Transverse colon (tissue), 4 donors: ENCODE measurements at regions of chr7 and their contacts with region 1.

Region 1: DNA sequence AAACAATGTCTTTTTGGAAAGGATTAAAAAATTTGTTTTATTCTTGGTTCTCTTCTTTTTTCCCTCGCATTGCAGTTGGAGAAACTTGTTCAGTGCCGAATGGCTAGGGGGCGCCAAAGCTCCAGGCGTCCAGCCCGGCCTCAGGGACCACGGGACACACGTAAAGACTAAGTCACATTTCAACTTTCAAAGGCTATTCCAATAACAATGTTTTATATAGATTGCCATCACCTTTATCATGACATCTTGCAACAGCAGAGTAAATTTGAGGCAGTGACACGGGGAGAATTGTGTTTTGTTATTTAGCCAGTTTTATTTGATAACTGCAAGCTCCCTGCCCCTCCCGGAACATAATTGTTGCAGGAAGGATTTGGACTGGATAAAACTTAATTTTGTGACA is 2.2 kb upstream of the IGFBP3 start:
- DNase-seq: peak; percentile 64
- H3K4me3 ChIP-seq: no peak overlapping the region
- H3K27ac ChIP-seq: peak overlapping the region in 3 of 4 donors; percentile 7 to 76 (median 30)
- H3K4me1 ChIP-seq: peaks cover 0 to 27% (median 19%) of the 10 kb centered on the region in 4 donors
- H3K27me3 ChIP-seq: peaks cover 54% of the 10 kb centered on the region
- CTCF ChIP-seq: peak; percentile 69 to 84 (median 80)
- EP300 ChIP-seq: no peak
- POLR2A ChIP-seq: no peak

Region 2: GRCh38 chr7:46352004-46352954 is 429.0 kb after region 1 on chr7:
- in situ Hi-C with region 1: loop called in 2 of 4 experiments (anchors 5 to 10 kb)
- intact Hi-C with region 1: no loop called
- DNase-seq: no peak
- H3K4me3 ChIP-seq: no peak overlapping the region
- H3K27ac ChIP-seq: no peak overlapping the region
- H3K4me1 ChIP-seq: no peaks in the 10 kb centered on the region
- H3K27me3 ChIP-seq: no peaks in the 10 kb centered on the region
- CTCF ChIP-seq: peak in 4 of 5 experiments; percentile 21 to 38 (median 25)
- EP300 ChIP-seq: no peak
- POLR2A ChIP-seq: no peak

Region 3: DNA sequence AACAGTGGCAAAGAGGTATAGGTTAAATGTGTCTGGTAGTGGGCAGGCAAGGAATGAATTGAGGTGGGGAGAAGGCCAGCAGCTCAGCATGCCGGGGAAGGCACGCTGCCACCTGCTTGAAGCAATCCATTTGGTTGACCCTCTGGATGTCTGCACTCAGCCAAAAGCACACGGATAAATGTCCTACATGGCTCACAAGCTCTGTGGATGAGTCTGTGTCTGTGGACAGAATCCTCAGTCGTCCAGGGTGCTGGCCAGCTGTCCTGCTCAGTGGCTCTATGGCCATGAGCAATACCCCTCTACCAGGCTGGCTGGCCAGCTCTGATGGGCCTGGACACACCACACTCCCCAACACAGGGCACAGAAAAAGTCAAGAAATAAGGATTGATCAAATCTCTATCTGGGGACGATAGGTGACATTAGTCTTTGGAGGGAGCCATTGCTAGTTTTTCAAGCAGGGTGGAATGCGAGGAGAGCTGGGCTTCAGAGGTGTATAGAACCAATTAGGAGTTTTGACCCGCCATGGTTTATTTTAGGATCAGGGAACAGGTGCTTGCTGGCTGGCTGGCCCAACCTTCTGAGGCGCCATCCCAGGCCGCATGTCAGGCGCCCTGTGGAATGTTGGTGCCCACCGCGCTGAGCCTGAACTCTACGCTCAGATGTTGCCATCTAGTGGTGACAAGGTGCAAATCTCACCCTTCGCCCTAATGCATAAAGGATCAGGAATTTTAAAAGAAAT is 1165.2 kb after region 1 on chr7:
- in situ Hi-C with region 1: loop called (anchors 5 to 10 kb)
- intact Hi-C with region 1: loop called (anchors 2 kb)
- DNase-seq: peak; percentile 27
- H3K4me3 ChIP-seq: no peak overlapping the region
- H3K27ac ChIP-seq: no peak overlapping the region
- H3K4me1 ChIP-seq: peaks cover 0 to 2% (median 0%) of the 10 kb centered on the region in 4 donors
- H3K27me3 ChIP-seq: no peaks in the 10 kb centered on the region
- CTCF ChIP-seq: peak; percentile 85 to 88 (median 86)
- EP300 ChIP-seq: no peak
- POLR2A ChIP-seq: no peak

Region 4: DNA sequence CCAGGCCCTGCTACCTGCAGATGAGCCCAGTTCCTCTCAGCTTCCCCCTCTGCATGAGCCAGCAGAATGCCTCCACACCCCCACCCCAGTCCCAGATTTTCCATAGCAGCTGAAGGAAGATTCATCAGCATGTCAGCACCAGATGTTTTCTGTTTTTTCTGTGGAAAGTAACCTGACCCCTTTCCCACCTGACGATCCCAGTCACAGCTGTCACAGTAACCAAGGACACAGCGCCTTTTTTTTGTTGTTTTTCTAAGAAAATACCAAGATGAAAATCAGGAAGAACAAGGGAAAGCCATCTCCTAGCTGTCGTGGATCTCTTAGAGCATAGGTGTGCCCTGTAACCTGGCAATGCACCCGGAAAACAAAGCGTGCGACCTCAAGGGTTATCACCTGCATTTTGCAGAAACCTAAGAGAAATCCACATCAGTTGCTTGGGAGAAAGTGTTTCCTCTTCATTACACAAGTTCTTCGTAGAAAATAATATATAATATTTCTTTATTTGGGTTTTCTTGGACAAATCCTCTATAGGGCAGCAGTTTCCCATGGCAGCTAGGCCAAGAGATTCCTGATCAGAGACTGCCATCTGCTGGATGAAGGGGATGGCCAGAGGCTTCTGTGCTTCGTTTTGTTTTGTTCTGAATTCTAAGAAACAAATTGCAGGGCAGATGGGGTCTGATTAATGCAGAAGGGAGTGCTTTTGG is 1256.7 kb after region 1 on chr7:
- in situ Hi-C with region 1: loop called (anchors 5 to 25 kb)
- intact Hi-C with region 1: loop called (anchors 1 kb)
- DNase-seq: peak; percentile 51
- H3K4me3 ChIP-seq: no peak overlapping the region
- H3K27ac ChIP-seq: no peak overlapping the region
- H3K4me1 ChIP-seq: peaks cover 5 to 26% (median 8%) of the 10 kb centered on the region in 4 donors
- H3K27me3 ChIP-seq: no peaks in the 10 kb centered on the region
- CTCF ChIP-seq: peak; percentile 75 to 81 (median 78)
- EP300 ChIP-seq: no peak
- POLR2A ChIP-seq: no peak